OCI-LY7 (cell line): ENCODE measurements at regions of chr21 and their contacts with region 1.

Region 1: DNA sequence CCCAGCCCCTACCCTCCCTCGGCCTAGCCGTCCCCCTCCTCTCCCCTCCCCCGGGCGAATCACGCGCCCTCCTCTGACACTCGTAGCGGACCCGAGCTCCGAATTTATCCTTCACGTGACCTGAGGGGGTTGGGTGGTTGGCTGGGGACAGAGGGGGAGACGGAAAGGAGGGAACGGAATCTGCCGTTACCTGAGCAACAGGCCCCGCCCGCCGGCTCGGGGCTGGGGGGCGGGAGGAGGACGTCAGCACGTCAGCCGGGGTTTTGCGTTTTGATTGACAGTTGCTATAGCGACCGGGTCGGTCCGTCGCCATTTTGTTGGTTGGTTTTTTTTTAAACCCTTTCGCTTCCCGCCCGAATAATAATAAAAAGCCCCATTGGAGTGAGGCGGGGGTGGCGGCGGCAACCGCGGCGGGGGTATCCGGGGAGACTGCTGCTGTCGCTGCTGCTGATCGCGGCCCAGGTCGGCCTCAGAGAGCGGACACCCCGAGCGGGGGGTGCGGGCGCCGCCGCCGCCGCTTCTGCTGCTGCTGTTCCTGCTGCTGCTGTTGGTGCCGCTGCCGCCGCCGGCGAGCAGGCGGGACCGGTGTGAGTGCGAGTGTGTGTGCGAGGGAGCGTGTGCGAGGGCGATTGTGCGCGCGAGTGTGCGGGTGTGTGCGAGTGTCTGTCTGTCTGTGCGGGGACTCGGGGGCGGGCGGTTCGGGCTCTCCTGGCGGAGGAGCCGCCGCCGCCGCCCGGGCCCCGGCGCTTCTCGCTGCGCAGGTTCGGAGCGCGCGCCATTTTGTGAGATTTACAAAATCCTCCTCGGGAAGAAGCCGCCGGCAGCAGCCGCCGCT is at the start of gene DYRK1A:
- DNase-seq: peak; percentile 98
- H3K4me3 ChIP-seq: peak within 1 kb of the TSS; percentile 86
- H3K27ac ChIP-seq: peak within 1 kb of the TSS; percentile 90
- H3K4me1 ChIP-seq: peaks cover 38% of the 10 kb centered on the region
- CTCF ChIP-seq: no peak
- total RNA-seq, gene DYRK1A: 46.3 and 58.4 TPM in 2 replicates

Region 2: DNA sequence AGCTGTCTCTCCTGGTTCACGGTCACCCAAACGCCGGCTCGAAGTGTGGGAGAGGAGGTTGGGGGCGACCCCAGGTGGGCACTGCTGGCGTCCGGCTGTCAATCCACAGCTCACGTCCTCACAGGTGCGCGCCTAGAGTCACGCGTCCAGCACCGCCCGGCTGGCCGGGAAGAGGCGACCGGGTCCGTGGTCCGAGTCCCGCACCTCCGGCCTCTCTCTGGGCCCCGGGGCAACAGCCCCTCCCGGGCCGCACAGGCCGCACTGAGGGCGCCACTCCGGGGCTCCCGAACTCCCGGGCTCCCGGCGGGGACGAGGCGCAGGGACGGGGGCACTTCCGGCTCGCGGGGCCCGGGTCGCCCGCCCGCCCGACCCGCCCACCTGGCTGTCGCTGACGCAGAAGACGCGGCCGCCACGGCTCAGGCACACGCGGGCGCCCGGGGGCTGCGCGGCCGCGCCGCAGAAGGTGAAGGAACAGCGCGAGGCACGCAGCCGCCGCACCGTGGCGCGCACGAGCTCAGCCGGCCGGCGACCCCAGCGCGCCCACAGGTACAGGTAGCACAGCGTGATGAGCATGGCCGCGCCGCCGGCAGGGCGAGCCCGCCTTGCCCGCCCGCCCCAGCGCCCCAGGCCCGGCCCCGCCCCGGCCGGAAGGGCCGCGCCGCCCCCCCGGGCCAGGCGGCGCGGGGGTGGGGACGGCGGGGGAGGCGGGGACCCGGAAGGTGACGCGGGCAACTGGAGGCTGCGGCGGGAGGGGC is 400.5 kb before region 1 on chr21 and contains the start of gene HLCS:
- CTCF ChIA-PET with region 1: no interaction called
- POLR2A ChIA-PET with region 1: no interaction called
- intact Hi-C with region 1: loop called (anchors 10 kb)
- DNase-seq: peak; percentile 87
- H3K4me3 ChIP-seq: peak within 1 kb of the TSS; percentile 92
- H3K27ac ChIP-seq: peak within 1 kb of the TSS; percentile 45
- H3K4me1 ChIP-seq: peaks cover 24% of the 10 kb centered on the region
- CTCF ChIP-seq: no peak
- total RNA-seq, gene HLCS: 12.0 and 13.7 TPM in 2 replicates

Region 3: GRCh38 chr21:37220981-37221664 is 145.6 kb before region 1 on chr21:
- CTCF ChIA-PET with region 1: no interaction called
- POLR2A ChIA-PET with region 1: no interaction called
- intact Hi-C with region 1: loop called (anchors 1 kb)
- DNase-seq: peak; percentile 97
- H3K4me3 ChIP-seq: peak overlapping the region; percentile 68
- H3K27ac ChIP-seq: peak overlapping the region; percentile 63
- H3K4me1 ChIP-seq: peaks cover 16% of the 10 kb centered on the region
- CTCF ChIP-seq: peak; percentile 77

Region 4: DNA sequence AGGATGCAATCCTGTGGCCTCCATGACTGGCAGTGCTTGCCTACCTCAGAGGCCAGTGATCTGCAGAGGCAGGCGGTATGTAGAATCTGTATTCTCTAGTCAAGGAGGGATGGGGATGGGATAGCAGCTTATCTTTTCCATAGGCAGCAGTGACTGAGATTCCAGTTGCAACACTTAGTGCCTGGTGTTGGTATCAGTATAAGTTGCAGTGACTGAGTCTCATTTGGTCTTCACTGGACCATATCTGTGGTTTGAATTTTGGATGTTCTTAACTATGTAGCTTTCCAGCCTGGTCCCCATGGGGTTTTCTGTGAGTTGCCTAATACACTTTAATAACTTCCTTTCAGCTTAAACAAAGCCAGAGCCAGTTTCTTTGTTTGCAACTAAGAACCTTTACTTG is 16.4 kb after region 1 on chr21:
- CTCF ChIA-PET with region 1: interaction called, 3 read pairs
- POLR2A ChIA-PET with region 1: interaction called, 17 read pairs
- intact Hi-C with region 1: no loop called
- DNase-seq: peak; percentile 10
- H3K4me3 ChIP-seq: no peak overlapping the region
- H3K27ac ChIP-seq: no peak overlapping the region
- H3K4me1 ChIP-seq: peaks cover 36% of the 10 kb centered on the region
- CTCF ChIP-seq: no peak

Region 5: DNA sequence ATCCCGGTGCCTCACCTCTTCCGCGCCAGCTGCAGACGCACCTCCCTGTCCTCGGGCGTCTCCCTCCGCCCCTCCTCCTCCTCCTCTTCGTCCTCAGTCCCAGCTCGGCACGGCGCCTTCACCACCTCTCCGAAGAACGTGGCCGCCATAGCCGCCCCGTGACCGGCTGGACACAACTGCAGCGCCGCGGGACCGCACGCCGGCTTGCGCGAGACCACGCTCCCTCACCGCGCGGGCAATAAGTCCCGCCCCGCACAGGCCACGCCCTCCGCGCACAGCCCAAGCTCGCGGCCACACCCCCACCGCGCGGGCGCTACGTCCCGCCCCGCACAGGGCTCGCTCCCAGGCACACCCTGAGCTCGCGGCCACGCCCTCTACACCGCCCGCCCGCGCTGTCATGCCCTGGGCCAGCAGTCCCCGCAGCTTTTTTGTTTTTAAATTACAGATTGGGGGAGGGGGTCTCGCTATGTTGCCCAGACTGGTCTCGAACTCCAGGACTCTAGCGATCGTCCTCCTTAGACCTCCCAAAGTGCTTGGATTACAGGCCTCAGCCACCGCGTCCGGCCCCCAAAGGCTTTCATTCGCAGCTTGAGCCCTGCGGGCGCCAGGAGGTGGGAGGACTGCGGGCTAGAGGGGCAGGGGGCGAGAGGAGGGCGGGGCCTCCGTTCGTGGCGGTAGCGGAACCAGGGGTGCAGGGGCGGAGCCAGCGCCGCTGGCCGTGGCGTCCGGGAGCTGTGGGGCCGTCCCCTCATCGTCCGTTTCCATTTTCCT is 1816.7 kb after region 1 on chr21 and contains the start of gene PSMG1:
- CTCF ChIA-PET with region 1: no interaction called
- POLR2A ChIA-PET with region 1: no interaction called
- intact Hi-C with region 1: loop called (anchors 10 kb)
- DNase-seq: peak; percentile 95
- H3K4me3 ChIP-seq: peak within 1 kb of the TSS; percentile 96
- H3K27ac ChIP-seq: peak within 1 kb of the TSS; percentile 62
- H3K4me1 ChIP-seq: peaks cover 35% of the 10 kb centered on the region
- CTCF ChIP-seq: no peak
- total RNA-seq, gene PSMG1: 76.9 and 87.2 TPM in 2 replicates